K562 (cell line): ENCODE measurements at regions of chrX and their contacts with region 1.

Region 1: GRCh38 chrX:119729408-119730201 is 28.8 kb upstream of the SOWAHD start:
- DNase-seq: peak; percentile 31 to 69 (median 43)
- ATAC-seq: peak; percentile 79
- H3K4me3 ChIP-seq: no peak overlapping the region
- H3K27ac ChIP-seq: no peak overlapping the region
- H3K4me1 ChIP-seq: peaks cover 0 to 5% of the 10 kb centered on the region in 2 experiments; a peak in 2 of 5 replicates
- H3K27me3 ChIP-seq: peaks cover 6 to 19% of the 10 kb centered on the region in 2 experiments; a peak in 3 of 5 replicates
- CTCF ChIP-seq: peak; percentile 58 to 78 (median 72)
- EP300 ChIP-seq: no peak
- POLR2A ChIP-seq: no peak
- RAD21 ChIP-seq: peak; percentile 70 to 79

Region 2: DNA sequence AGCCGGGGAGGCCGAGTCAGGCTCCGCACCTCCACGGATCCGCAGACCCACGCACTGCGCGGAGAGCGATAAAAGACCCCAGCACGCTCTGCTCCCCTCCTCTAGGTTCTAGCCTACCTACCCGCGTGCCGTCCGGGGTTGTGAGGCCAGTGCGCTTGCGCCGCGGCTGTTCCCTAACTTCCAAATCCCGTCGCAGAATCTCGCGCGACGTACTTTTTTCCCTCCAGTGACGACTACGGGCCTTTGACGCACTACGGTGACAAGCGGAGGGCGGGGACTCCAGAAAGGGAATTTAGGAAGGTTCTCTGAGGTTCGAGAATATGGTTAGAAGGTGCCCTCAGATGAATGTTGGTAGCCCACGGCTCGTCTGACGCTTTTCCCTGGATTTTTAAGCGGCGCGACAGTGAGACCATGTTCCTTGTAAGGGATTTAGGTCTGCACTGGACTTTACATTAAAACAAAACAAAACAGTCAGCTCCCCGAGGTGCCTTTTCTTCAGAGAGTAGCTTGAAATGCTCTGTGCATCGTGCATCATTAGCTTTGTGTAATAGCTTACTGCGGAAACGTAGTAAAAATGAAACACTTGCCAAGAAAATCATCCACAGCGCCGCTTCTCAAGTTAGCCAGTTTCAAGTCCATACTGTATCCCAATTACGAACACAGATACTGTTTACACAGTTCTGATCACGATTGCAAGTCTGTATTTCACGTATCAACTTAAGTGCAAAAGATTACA is 123.2 kb before region 1 on chrX and contains the start of gene NKRF:
- CTCF ChIA-PET with region 1: interaction called, 11 read pairs
- POLR2A ChIA-PET with region 1: interaction called, 4 read pairs
- in situ Hi-C with region 1: loop called (anchors 5 kb)
- intact Hi-C with region 1: loop called (anchors 2 kb)
- DNase-seq: peak; percentile 83 to 96 (median 86)
- ATAC-seq: peak; percentile 92
- H3K4me3 ChIP-seq: peak within 1 kb of the TSS; percentile 84
- H3K27ac ChIP-seq: peak within 1 kb of the TSS; percentile 95
- H3K4me1 ChIP-seq: peaks cover 7 to 12% of the 10 kb centered on the region in 2 experiments; a peak in 4 of 5 replicates
- H3K27me3 ChIP-seq: no peaks in the 10 kb centered on the region
- CTCF ChIP-seq: no peak; a peak in 1 of 6 replicates
- EP300 ChIP-seq: no peak
- POLR2A ChIP-seq: peak; percentile 96
- RAD21 ChIP-seq: no peak
- polyA plus RNA-seq, gene NKRF: 8.9 to 10.8 TPM

Region 3: GRCh38 chrX:119614776-119615175 is 114.8 kb before region 1 on chrX:
- CTCF ChIA-PET with region 1: interaction called, 11 read pairs
- POLR2A ChIA-PET with region 1: no interaction called
- in situ Hi-C with region 1: loop called (anchors 5 kb)
- intact Hi-C with region 1: loop called (anchors 2 kb)
- DNase-seq: peak in 2 of 4 experiments; percentile 14 to 37
- ATAC-seq: peak; percentile 51
- H3K4me3 ChIP-seq: no peak overlapping the region
- H3K27ac ChIP-seq: no peak overlapping the region
- H3K4me1 ChIP-seq: no peaks in the 10 kb centered on the region
- H3K27me3 ChIP-seq: no peaks in the 10 kb centered on the region
- CTCF ChIP-seq: no peak
- EP300 ChIP-seq: no peak
- POLR2A ChIP-seq: no peak
- RAD21 ChIP-seq: no peak

Region 4: DNA sequence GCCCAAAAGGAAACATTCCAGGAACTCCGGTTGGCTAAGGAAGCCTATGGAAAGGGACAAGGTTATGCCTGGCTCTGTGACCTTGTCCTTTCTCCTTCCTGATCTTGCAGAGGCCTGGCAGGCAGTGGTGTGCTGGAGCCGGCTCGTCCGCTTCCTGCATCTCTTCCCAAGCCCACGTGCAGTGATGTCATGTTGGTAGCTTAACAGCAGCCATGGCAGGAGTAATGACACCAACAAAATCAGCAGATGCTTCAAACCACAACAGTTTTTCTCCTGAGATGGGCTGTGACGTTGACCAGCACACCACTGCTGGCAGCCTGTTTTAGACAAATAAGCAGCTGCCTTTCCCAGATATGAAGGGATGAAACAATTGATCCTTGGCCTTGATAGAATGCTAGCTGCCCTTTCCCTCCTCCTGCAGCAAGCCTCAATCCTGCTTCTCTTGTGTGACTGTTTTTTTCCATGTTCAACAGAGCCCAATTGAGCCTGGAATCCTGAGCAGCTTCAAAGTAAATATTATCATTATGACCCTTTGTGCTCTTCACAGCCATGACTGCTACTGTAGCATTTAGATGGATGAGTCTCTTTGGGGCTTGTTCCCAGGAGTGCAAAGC is 60.1 kb before region 1 on chrX:
- CTCF ChIA-PET with region 1: no interaction called
- POLR2A ChIA-PET with region 1: no interaction called
- in situ Hi-C with region 1: no loop called
- intact Hi-C with region 1: no loop called
- DNase-seq: peak in 1 of 4 experiments; percentile 26
- ATAC-seq: no peak
- H3K4me3 ChIP-seq: no peak overlapping the region
- H3K27ac ChIP-seq: no peak overlapping the region
- H3K4me1 ChIP-seq: no peaks in the 10 kb centered on the region; a peak in 3 of 5 replicates
- H3K27me3 ChIP-seq: no peaks in the 10 kb centered on the region
- CTCF ChIP-seq: no peak
- EP300 ChIP-seq: no peak
- POLR2A ChIP-seq: no peak
- RAD21 ChIP-seq: no peak

Region 5: DNA sequence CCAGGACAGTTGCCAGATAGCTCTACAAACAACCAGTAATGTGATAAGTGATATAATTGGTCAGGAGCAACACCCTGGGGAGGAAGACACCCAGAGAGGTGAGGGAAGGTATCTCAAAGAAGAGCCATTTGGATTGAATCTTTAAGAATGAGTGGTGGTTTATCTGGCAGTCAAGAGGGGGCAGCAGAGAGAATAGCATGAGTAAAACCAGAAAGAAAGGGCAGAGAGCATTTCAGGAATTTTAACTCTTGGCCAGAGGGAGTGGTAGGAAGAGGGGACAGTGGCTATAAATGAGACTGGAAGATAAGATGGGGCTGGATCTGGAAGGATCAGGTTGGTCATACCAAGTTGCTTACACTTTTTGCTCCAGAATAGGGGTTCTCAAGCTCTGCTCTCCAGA is 30.8 kb before region 1 on chrX:
- CTCF ChIA-PET with region 1: no interaction called
- POLR2A ChIA-PET with region 1: no interaction called
- in situ Hi-C with region 1: no loop called
- intact Hi-C with region 1: loop called (anchors 5 kb)
- DNase-seq: peak; percentile 23 to 66 (median 42)
- ATAC-seq: peak; percentile 78
- H3K4me3 ChIP-seq: no peak overlapping the region
- H3K27ac ChIP-seq: no peak overlapping the region
- H3K4me1 ChIP-seq: peaks cover 0 to 13% of the 10 kb centered on the region in 2 experiments; a peak in 3 of 5 replicates
- H3K27me3 ChIP-seq: no peaks in the 10 kb centered on the region
- CTCF ChIP-seq: peak; percentile 58 to 71 (median 65)
- EP300 ChIP-seq: no peak
- POLR2A ChIP-seq: no peak
- RAD21 ChIP-seq: peak in 1 of 2 experiments; percentile 54; a peak in 3 of 4 replicates

Region 6: DNA sequence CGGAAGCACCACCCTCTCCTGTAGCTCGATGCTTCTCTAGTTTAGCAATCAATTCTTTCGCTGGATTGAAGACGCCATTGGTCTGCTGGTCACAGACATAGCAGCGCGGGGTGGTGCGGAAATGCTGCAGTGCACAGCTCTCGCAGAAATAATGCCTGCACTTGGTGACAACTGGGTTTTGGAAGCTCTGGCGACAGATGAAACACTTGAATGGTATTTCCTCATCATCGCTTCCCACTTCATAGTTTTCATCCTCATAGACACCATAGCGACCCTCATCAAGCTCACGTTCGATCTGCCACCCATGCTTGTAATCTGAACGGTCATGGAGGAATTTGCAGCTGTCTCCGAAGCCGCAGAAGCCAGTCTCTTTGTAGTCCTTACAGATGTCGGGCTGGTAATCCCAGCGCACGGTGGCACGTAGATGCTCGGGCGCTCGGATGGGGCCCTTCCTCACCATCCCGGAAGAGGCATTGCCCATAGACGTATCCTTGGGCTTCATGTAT is 141.1 kb after region 1 on chrX:
- CTCF ChIA-PET with region 1: no interaction called
- POLR2A ChIA-PET with region 1: no interaction called
- in situ Hi-C with region 1: no loop called
- intact Hi-C with region 1: no loop called
- DNase-seq: peak in 3 of 4 experiments; percentile 16 to 52 (median 27)
- ATAC-seq: peak; percentile 65
- H3K4me3 ChIP-seq: peak overlapping the region; percentile 94
- H3K27ac ChIP-seq: peak overlapping the region; percentile 99
- H3K4me1 ChIP-seq: peaks cover 0 to 6% of the 10 kb centered on the region in 2 experiments; a peak in 2 of 5 replicates
- H3K27me3 ChIP-seq: no peaks in the 10 kb centered on the region
- CTCF ChIP-seq: no peak
- EP300 ChIP-seq: no peak
- POLR2A ChIP-seq: no peak
- RAD21 ChIP-seq: no peak